Prostate gland (tissue), 2 donors: ENCODE measurements at regions of chr1 and their contacts with region 1.

Region 1: GRCh38 chr1:19974822-19975416 is 4.5 kb downstream of the PLA2G2A start:
- DNase-seq: peak; percentile 66
- H3K4me3 ChIP-seq: no peak overlapping the region
- H3K27ac ChIP-seq: no peak overlapping the region
- H3K4me1 ChIP-seq: no peaks in the 10 kb centered on the region
- H3K27me3 ChIP-seq: no peaks in the 10 kb centered on the region
- CTCF ChIP-seq: peak; percentile 57 to 92 (median 75)
- POLR2A ChIP-seq: no peak

Region 2: DNA sequence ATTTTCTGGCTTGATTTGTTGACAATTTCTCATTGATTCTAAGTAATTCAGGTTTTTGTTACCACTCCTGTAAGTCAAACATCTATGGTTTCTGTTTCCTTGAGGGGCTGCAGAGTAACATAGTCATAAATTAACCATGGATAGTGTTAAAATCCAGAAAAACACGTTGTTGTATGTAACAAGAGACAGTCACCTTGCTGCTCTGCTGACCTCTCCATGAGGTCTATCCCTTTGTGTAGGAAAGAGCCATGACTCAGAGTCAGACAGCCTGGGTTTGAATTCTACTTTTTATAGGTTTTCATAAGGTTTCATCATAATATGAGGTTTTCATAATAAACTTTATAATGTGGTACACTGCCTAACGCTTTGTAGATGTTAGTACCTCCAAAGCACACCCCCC is 358.4 kb before region 1 on chr1:
- intact Hi-C with region 1: no loop called
- DNase-seq: no peak
- H3K4me3 ChIP-seq: no peak overlapping the region
- H3K27ac ChIP-seq: peak overlapping the region in 1 of 2 donors; percentile 73
- H3K4me1 ChIP-seq: peaks cover 45% of the 10 kb centered on the region
- H3K27me3 ChIP-seq: no peaks in the 10 kb centered on the region
- CTCF ChIP-seq: no peak
- POLR2A ChIP-seq: no peak

Region 3: GRCh38 chr1:20069874-20070273 is 95.0 kb after region 1 on chr1 and contains the start of gene PLA2G5:
- intact Hi-C with region 1: loop called (anchors 5 kb)
- DNase-seq: no peak
- H3K4me3 ChIP-seq: peak within 1 kb of the TSS in 1 of 2 donors; percentile 3
- H3K27ac ChIP-seq: peak within 1 kb of the TSS; percentile 26 to 27
- H3K4me1 ChIP-seq: no peaks in the 10 kb centered on the region
- H3K27me3 ChIP-seq: no peaks in the 10 kb centered on the region
- CTCF ChIP-seq: no peak
- POLR2A ChIP-seq: no peak
- total RNA-seq, gene PLA2G5: 8.7 to 23.2 TPM

Region 4: GRCh38 chr1:20151906-20152598 is 177.1 kb after region 1 on chr1:
- intact Hi-C with region 1: loop called (anchors 5 kb)
- DNase-seq: peak; percentile 59
- H3K4me3 ChIP-seq: peak overlapping the region; percentile 11 to 29
- H3K27ac ChIP-seq: peak overlapping the region in 1 of 2 donors; percentile 30
- H3K4me1 ChIP-seq: no peaks in the 10 kb centered on the region
- H3K27me3 ChIP-seq: no peaks in the 10 kb centered on the region
- CTCF ChIP-seq: peak; percentile 86 to 96 (median 92)
- POLR2A ChIP-seq: no peak

Region 5: DNA sequence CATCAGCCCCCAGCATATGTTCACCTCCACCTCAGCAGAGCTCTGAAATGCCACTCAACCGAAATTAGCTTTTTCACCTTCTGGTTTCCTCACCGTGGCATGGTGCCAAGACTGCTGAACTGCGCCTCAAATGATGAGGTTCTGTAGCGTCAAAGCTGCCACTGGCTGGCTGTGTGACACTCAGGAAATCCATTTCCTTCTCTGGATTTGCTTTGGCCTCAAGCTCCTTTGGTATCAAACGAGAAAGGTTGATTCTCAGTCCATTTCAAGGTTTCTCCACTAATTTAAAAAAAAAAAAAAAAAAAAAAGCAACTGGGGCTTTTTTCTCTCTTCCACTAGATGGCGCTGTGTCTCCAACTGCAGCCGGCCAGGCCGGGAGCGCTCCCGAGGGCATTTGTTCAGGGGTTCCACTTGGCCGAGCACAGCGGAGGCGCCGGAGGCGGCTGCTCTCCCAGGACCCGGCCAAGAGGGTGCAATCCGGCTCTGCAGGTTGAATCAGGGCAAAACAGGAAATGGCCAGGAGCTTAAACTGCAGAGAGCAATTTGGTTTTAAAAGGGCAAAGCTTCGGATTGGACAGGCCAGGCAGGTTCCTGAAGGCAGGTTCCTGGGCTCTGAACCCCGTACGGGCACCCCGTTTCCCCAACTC is 237.9 kb after region 1 on chr1:
- intact Hi-C with region 1: loop called (anchors 5 kb)
- DNase-seq: peak; percentile 57
- H3K4me3 ChIP-seq: no peak overlapping the region
- H3K27ac ChIP-seq: no peak overlapping the region
- H3K4me1 ChIP-seq: no peaks in the 10 kb centered on the region
- H3K27me3 ChIP-seq: no peaks in the 10 kb centered on the region
- CTCF ChIP-seq: peak; percentile 54 to 79 (median 56)
- POLR2A ChIP-seq: no peak

Region 6: GRCh38 chr1:20376880-20377494 is 402.1 kb after region 1 on chr1:
- intact Hi-C with region 1: no loop called
- DNase-seq: no peak
- H3K4me3 ChIP-seq: no peak overlapping the region
- H3K27ac ChIP-seq: no peak overlapping the region
- H3K4me1 ChIP-seq: no peaks in the 10 kb centered on the region
- H3K27me3 ChIP-seq: no peaks in the 10 kb centered on the region
- CTCF ChIP-seq: peak in 3 of 4 experiments; percentile 40 to 61 (median 57)
- POLR2A ChIP-seq: no peak